ENCODE measurements at regions of chr17 and their contacts with region 1.

Region 1: DNA sequence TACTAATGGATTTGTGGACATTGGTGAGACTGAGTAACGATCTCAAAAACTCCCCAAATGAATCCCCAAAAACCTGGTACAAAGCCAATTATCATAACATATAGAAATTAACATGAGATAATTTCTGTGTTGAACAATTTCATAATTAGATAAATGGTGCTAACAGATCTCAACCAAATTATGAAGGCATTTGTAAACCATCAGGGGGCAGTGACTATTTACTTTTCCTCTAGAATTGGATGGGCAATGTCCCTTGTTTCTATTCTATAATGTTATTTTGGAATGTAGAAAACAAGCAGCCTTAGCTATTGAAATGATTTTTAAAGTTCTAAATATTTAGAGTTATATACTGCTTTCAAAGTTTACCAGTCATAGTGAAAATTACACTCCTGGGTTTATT is 57.8 kb downstream of the MYH10 start:
- DNase-seq: no peak
- ATAC-seq: no peak
- H3K4me3 ChIP-seq: no peak overlapping the region
- H3K27ac ChIP-seq: no peak overlapping the region
- H3K4me1 ChIP-seq: peaks cover 0 to 7% of the 10 kb centered on the region in 2 donors
- H3K27me3 ChIP-seq: no peaks in the 10 kb centered on the region

Region 2: GRCh38 chr17:8621585-8621984 is 48.8 kb after region 1 on chr17:
- intact Hi-C with region 1: loop called in 1 of 2 experiments (anchors 5 kb)
- DNase-seq: no peak
- ATAC-seq: peak; percentile 49
- H3K4me3 ChIP-seq: peak overlapping the region; percentile 46 to 84
- H3K27ac ChIP-seq: peak overlapping the region; percentile 34 to 49
- H3K4me1 ChIP-seq: peaks cover 1 to 6% of the 10 kb centered on the region in 2 donors
- H3K27me3 ChIP-seq: no peaks in the 10 kb centered on the region